CD8-positive, alpha-beta T cell (primary cell): ENCODE measurements at regions of chr6 and their contacts with region 1.

Region 1: GRCh38 chr6:36678518-36679027 is at the start of gene CDKN1A:
- DNase-seq: peak; percentile 28 to 87 (median 73)
- ATAC-seq: peak; percentile 45
- H3K4me3 ChIP-seq: peak within 1 kb of the TSS; percentile 77 to 78
- H3K4me3 Mint-ChIP-seq: peak within 1 kb of the TSS; percentile 92
- H3K27ac ChIP-seq: no peak within 1 kb of the TSS
- H3K27ac Mint-ChIP-seq: peak within 1 kb of the TSS; percentile 87
- H3K4me1 ChIP-seq: peaks cover 25% of the 10 kb centered on the region
- H3K4me1 Mint-ChIP-seq: peaks cover 25% of the 10 kb centered on the region
- H3K27me3 ChIP-seq: peaks cover 0 to 10% of the 10 kb centered on the region in 2 experiments
- H3K27me3 Mint-ChIP-seq: peaks cover 3% of the 10 kb centered on the region
- CTCF ChIP-seq: no peak
- total RNA-seq, gene CDKN1A: 71.3 to 78.7 TPM

Region 2: DNA sequence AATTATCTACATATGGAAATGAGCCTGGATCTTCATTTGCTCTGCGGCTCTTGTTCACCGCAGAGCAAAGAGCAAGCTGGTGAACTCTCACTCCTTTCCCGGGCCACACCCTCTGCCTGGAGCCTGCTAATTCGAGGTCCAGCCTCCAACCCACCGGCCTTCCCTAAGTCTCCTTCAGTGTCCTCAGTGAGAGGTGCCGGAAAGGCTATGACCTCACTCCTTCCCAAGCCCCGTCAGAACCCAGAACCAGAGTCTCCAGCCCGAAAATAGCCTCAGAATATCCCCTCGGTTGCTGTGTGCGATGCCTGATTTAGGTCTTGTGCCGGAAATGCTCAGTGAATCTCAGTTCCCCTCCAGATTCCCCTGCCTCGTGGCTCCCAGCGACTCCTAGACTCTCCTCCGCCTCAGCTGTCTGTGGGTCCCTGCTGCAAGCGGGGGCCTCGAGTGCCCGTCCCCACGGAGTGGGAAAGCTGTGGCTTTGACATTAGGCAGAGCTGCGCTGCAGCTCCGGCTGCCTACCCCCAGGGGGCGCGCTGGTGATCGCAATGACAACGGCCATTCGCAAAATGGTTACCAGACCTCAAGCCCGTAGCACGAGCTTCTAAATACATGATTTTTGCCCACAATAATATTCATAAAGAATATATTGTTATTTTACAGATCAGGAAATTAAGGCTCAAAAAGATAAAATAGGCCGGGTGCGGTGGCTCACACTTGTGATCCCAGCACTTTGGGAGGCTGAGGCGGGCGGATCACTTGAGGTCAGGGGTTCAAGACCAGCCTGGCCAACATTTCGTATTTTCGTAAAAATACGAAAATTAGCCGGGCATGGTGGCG is 337.7 kb before region 1 on chr6:
- CTCF ChIA-PET with region 1: no interaction called
- POLR2A ChIA-PET with region 1: no interaction called
- intact Hi-C with region 1: loop called in 1 of 2 experiments (anchors 1 kb)
- DNase-seq: peak; percentile 51 to 79 (median 70)
- ATAC-seq: peak; percentile 82
- H3K4me3 ChIP-seq: no peak overlapping the region
- H3K4me3 Mint-ChIP-seq: peak overlapping the region; percentile 60
- H3K27ac ChIP-seq: no peak overlapping the region
- H3K27ac Mint-ChIP-seq: no peak overlapping the region
- H3K4me1 ChIP-seq: peaks cover 5% of the 10 kb centered on the region
- H3K4me1 Mint-ChIP-seq: peaks cover 13% of the 10 kb centered on the region
- H3K27me3 ChIP-seq: peaks cover 0 to 7% of the 10 kb centered on the region in 2 experiments
- H3K27me3 Mint-ChIP-seq: peaks cover 25% of the 10 kb centered on the region
- CTCF ChIP-seq: peak; percentile 99

Region 3: GRCh38 chr6:36442671-36443470 is 235.7 kb before region 1 on chr6 and contains the starts of genes KCTD20 and PXT1:
- CTCF ChIA-PET with region 1: no interaction called
- POLR2A ChIA-PET with region 1: no interaction called
- intact Hi-C with region 1: loop called (anchors 1 kb)
- DNase-seq: peak; percentile 66 to 92 (median 86)
- ATAC-seq: peak; percentile 71
- H3K4me3 ChIP-seq: peak within 1 kb of the TSS; percentile 64 to 97
- H3K4me3 Mint-ChIP-seq: peak within 1 kb of the TSS; percentile 97
- H3K27ac ChIP-seq: peak within 1 kb of the TSS; percentile 72 to 90
- H3K27ac Mint-ChIP-seq: peak within 1 kb of the TSS; percentile 99
- H3K4me1 ChIP-seq: peaks cover 31% of the 10 kb centered on the region
- H3K4me1 Mint-ChIP-seq: peaks cover 49% of the 10 kb centered on the region
- H3K27me3 ChIP-seq: no peaks in the 10 kb centered on the region
- H3K27me3 Mint-ChIP-seq: no peaks in the 10 kb centered on the region
- CTCF ChIP-seq: no peak
- total RNA-seq, gene KCTD20: 42.5 to 49.1 TPM
- total RNA-seq, gene PXT1: 0.56 to 0.95 TPM

Region 4: DNA sequence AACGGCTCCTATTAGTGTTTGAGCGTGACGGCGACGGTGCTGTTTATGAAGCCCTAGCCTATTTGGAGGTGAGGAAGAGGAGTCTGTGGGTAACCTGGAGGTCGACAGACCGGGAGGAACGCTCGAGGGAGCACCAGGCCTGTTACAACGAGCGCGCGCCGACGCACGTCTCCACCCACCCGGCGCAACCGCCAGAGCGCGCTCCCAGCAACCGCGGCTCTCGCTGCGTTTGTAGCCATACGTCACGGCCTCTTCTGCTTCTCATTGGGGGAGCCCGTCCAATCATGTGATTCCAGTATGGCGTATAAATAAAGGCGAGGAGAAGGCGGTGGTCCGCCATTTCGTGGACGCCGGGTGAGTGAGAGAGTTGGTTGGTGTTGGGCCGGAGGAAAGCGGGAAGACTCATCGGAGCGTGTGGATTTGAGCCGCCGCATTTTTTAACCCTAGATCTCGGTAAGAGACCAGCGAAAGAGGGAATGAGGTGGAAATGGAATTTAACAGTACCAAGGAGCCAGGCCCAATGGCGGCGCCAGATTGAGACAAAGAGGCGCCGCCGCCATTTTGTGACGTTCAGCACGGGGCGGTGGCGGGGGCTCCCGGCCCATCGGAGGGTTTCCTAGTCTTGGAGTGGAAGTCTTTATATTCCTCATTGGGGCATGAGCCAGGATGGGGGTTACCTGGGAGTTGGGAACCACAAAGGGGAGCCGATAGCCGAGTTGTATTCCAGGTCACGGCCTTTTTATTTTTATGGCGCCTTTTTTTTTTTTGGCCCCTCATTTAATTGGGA is 84.4 kb before region 1 on chr6 and contains the start of gene SRSF3:
- CTCF ChIA-PET with region 1: interaction called, 3 read pairs
- POLR2A ChIA-PET with region 1: interaction called, 4 read pairs
- intact Hi-C with region 1: loop called (anchors 1 kb)
- DNase-seq: peak; percentile 90 to 99 (median 94)
- ATAC-seq: peak; percentile 86
- H3K4me3 ChIP-seq: peak within 1 kb of the TSS; percentile 72 to 74
- H3K4me3 Mint-ChIP-seq: peak within 1 kb of the TSS; percentile 97
- H3K27ac ChIP-seq: peak within 1 kb of the TSS; percentile 93 to 95
- H3K27ac Mint-ChIP-seq: peak within 1 kb of the TSS; percentile 99
- H3K4me1 ChIP-seq: peaks cover 42% of the 10 kb centered on the region
- H3K4me1 Mint-ChIP-seq: peaks cover 45% of the 10 kb centered on the region
- H3K27me3 ChIP-seq: no peaks in the 10 kb centered on the region
- H3K27me3 Mint-ChIP-seq: no peaks in the 10 kb centered on the region
- CTCF ChIP-seq: no peak
- total RNA-seq, gene SRSF3: 620 to 627 TPM

Region 5: GRCh38 chr6:36623547-36624459 is 54.8 kb before region 1 on chr6:
- CTCF ChIA-PET with region 1: interaction called, 16 read pairs
- POLR2A ChIA-PET with region 1: interaction called, 4 read pairs
- intact Hi-C with region 1: loop called (anchors 1 kb)
- DNase-seq: peak; percentile 54 to 85 (median 80)
- ATAC-seq: peak; percentile 95
- H3K4me3 ChIP-seq: no peak overlapping the region
- H3K4me3 Mint-ChIP-seq: no peak overlapping the region
- H3K27ac ChIP-seq: no peak overlapping the region
- H3K27ac Mint-ChIP-seq: no peak overlapping the region
- H3K4me1 ChIP-seq: peaks cover 3% of the 10 kb centered on the region
- H3K4me1 Mint-ChIP-seq: peaks cover 8% of the 10 kb centered on the region
- H3K27me3 ChIP-seq: no peaks in the 10 kb centered on the region
- H3K27me3 Mint-ChIP-seq: no peaks in the 10 kb centered on the region
- CTCF ChIP-seq: peak; percentile 78

Region 6: DNA sequence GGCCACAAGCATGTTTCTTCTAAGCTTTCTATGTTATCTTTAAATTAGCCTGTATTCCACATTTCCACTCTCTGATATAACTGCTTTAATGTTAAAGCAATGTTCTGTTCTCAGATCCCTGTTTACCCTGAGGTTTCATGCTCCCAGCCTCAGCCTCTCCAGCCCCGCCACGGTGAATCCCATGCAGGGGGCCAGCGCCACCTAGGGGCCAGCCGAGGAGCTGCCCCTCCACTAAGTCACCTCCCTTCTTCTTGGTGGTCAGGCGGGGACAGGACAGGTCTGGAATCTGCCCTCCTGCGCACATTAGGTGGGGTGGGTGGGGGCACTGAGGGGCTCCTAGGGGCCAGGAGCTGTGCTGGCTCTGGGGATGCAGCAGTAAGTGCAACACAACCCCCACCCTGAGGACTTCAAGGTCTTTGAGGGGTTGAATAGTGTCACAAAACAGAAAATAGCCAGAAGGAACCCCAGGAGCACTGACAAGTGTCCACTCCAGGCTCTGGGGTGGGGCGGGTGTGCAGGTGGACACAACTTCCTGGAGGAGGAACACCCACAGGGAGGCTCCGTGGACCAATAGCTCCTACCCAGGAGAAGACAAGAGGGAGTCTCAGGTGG is 80.7 kb after region 1 on chr6:
- CTCF ChIA-PET with region 1: interaction called, 4 read pairs
- POLR2A ChIA-PET with region 1: no interaction called
- intact Hi-C with region 1: loop called (anchors 1 kb)
- DNase-seq: peak; percentile 48 to 83 (median 81)
- ATAC-seq: peak; percentile 50
- H3K4me3 ChIP-seq: no peak overlapping the region
- H3K4me3 Mint-ChIP-seq: no peak overlapping the region
- H3K27ac ChIP-seq: no peak overlapping the region
- H3K27ac Mint-ChIP-seq: no peak overlapping the region
- H3K4me1 ChIP-seq: peaks cover 15% of the 10 kb centered on the region
- H3K4me1 Mint-ChIP-seq: peaks cover 31% of the 10 kb centered on the region
- H3K27me3 ChIP-seq: no peaks in the 10 kb centered on the region
- H3K27me3 Mint-ChIP-seq: no peaks in the 10 kb centered on the region
- CTCF ChIP-seq: peak; percentile 96

Region 7: GRCh38 chr6:38234934-38235682 is 1556.5 kb after region 1 on chr6:
- CTCF ChIA-PET with region 1: no interaction called
- POLR2A ChIA-PET with region 1: no interaction called
- intact Hi-C with region 1: no loop called
- DNase-seq: no peak
- ATAC-seq: no peak
- H3K4me3 ChIP-seq: no peak overlapping the region
- H3K4me3 Mint-ChIP-seq: no peak overlapping the region
- H3K27ac ChIP-seq: no peak overlapping the region
- H3K27ac Mint-ChIP-seq: no peak overlapping the region
- H3K4me1 ChIP-seq: no peaks in the 10 kb centered on the region
- H3K4me1 Mint-ChIP-seq: no peaks in the 10 kb centered on the region
- H3K27me3 ChIP-seq: no peaks in the 10 kb centered on the region
- H3K27me3 Mint-ChIP-seq: no peaks in the 10 kb centered on the region
- CTCF ChIP-seq: no peak